ENCODE measurements at regions of chr15 and their contacts with region 1.

Region 1: GRCh38 chr15:73240866-73241499 is 127.8 kb downstream of the HCN4 start:
- H3K4me3 ChIP-seq: no peak overlapping the region
- H3K27ac ChIP-seq: no peak overlapping the region
- H3K4me1 ChIP-seq: no peaks in the 10 kb centered on the region
- CTCF ChIP-seq: peak; percentile 69

Region 2: GRCh38 chr15:73225358-73226015 is 15.5 kb before region 1 on chr15:
- CTCF ChIA-PET with region 1: interaction called, 13 read pairs
- POLR2A ChIA-PET with region 1: no interaction called
- H3K4me3 ChIP-seq: no peak overlapping the region
- H3K27ac ChIP-seq: no peak overlapping the region
- H3K4me1 ChIP-seq: no peaks in the 10 kb centered on the region
- CTCF ChIP-seq: no peak

Region 3: GRCh38 chr15:73265536-73266153 is 24.7 kb after region 1 on chr15:
- CTCF ChIA-PET with region 1: interaction called, 82 read pairs
- POLR2A ChIA-PET with region 1: no interaction called
- H3K4me3 ChIP-seq: no peak overlapping the region
- H3K27ac ChIP-seq: no peak overlapping the region
- H3K4me1 ChIP-seq: no peaks in the 10 kb centered on the region
- CTCF ChIP-seq: 0 out of 2 replicates have a peak, but pooled peaks have one; percentile 20

Region 4: GRCh38 chr15:73273181-73274002 is 32.4 kb after region 1 on chr15:
- CTCF ChIA-PET with region 1: interaction called, 121 read pairs
- POLR2A ChIA-PET with region 1: no interaction called
- H3K4me3 ChIP-seq: no peak overlapping the region
- H3K27ac ChIP-seq: no peak overlapping the region
- H3K4me1 ChIP-seq: no peaks in the 10 kb centered on the region
- CTCF ChIP-seq: peak; percentile 52; the same call in 1 of the 2 replicates

Region 5: GRCh38 chr15:73284090-73284716 is 43.2 kb after region 1 on chr15:
- CTCF ChIA-PET with region 1: interaction called, 13 read pairs
- POLR2A ChIA-PET with region 1: no interaction called
- H3K4me3 ChIP-seq: no peak overlapping the region
- H3K27ac ChIP-seq: no peak overlapping the region
- H3K4me1 ChIP-seq: no peaks in the 10 kb centered on the region
- CTCF ChIP-seq: no peak